PC-9 (cell line): ENCODE measurements at regions of chr2 and their contacts with region 1.

Region 1: GRCh38 chr2:173191601-173192000 is 116.0 kb downstream of the MAP3K20 start:
- DNase-seq: peak; percentile 43 to 75
- H3K4me3 ChIP-seq: no peak overlapping the region
- H3K27ac ChIP-seq: no peak overlapping the region
- H3K4me1 ChIP-seq: peaks cover 9% of the 10 kb centered on the region; the same call in 1 of the 2 replicates
- H3K27me3 ChIP-seq: no peaks in the 10 kb centered on the region
- CTCF ChIP-seq: no peak

Region 2: GRCh38 chr2:173043476-173043875 is 148.1 kb before region 1 on chr2:
- CTCF ChIA-PET with region 1: no interaction called
- POLR2A ChIA-PET with region 1: no interaction called
- intact Hi-C with region 1: no loop called
- DNase-seq: no peak
- H3K4me3 ChIP-seq: no peak overlapping the region
- H3K27ac ChIP-seq: no peak overlapping the region
- H3K4me1 ChIP-seq: peaks cover 27% of the 10 kb centered on the region
- H3K27me3 ChIP-seq: no peaks in the 10 kb centered on the region
- CTCF ChIP-seq: no peak

Region 3: DNA sequence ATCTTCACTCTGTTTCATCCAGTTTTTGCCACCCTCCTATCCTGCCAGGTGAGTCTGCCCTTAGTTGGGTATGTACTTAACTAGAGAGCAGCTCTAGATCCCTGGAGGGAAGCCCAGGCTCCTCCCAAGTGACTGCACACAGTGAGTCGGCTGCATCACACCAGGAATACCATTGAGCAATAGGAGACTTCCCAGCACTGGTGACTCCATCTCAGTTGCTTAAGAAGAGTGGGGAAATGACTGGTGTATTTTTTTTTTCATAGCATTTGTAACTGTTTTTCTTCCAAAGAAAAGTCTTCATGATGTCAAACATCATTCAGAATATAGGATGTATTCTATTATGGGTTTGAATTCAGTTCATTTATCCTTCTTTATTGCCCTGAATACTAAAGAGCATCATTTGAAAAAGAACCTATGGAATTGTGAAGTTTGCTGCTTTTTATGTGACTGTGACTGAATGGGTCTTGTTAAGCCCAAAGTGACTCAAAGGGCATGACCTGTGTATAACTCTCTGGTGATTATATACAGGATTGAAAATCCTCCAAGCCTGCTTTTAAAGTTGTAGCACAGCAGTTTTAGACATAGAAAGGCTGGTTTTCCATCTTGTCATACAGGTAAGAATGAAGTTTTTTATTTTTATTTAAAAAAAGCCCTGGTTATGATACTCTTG is 31.7 kb before region 1 on chr2:
- CTCF ChIA-PET with region 1: no interaction called
- POLR2A ChIA-PET with region 1: interaction called, 10 read pairs
- intact Hi-C with region 1: no loop called
- DNase-seq: peak; percentile 87 to 99
- H3K4me3 ChIP-seq: no peak overlapping the region
- H3K27ac ChIP-seq: peak overlapping the region; percentile 70
- H3K4me1 ChIP-seq: peaks cover 37% of the 10 kb centered on the region
- H3K27me3 ChIP-seq: no peaks in the 10 kb centered on the region
- CTCF ChIP-seq: no peak

Region 4: GRCh38 chr2:173218326-173219056 is 26.9 kb after region 1 on chr2:
- CTCF ChIA-PET with region 1: no interaction called
- POLR2A ChIA-PET with region 1: no interaction called
- intact Hi-C with region 1: no loop called
- DNase-seq: no peak
- H3K4me3 ChIP-seq: no peak overlapping the region
- H3K27ac ChIP-seq: no peak overlapping the region
- H3K4me1 ChIP-seq: no peaks in the 10 kb centered on the region
- H3K27me3 ChIP-seq: no peaks in the 10 kb centered on the region
- CTCF ChIP-seq: no peak